WTC11 (cell line): ENCODE measurements at regions of chr3 and their contacts with region 1.

Region 1: GRCh38 chr3:31550452-31551251 is 17.9 kb downstream of the STT3B start:
- DNase-seq: no peak
- ATAC-seq: peak; percentile 73; the same call in 1 of the 2 replicates
- H3K4me3 Mint-ChIP-seq: no peak overlapping the region
- H3K27ac Mint-ChIP-seq: no peak overlapping the region
- H3K4me1 Mint-ChIP-seq: peaks cover 56% of the 10 kb centered on the region
- H3K27me3 Mint-ChIP-seq: no peaks in the 10 kb centered on the region
- CTCF ChIP-seq: no peak

Region 2: GRCh38 chr3:31531992-31532586 is 18.6 kb before region 1 on chr3:
- CTCF ChIA-PET with region 1: interaction called, 11 read pairs
- POLR2A ChIA-PET with region 1: interaction called, 11 read pairs
- DNase-seq: peak; percentile 99
- ATAC-seq: peak; percentile 95
- H3K4me3 Mint-ChIP-seq: no peak overlapping the region
- H3K27ac Mint-ChIP-seq: peak overlapping the region; percentile 98
- H3K4me1 Mint-ChIP-seq: peaks cover 25% of the 10 kb centered on the region
- H3K27me3 Mint-ChIP-seq: no peaks in the 10 kb centered on the region
- CTCF ChIP-seq: no peak

Region 3: DNA sequence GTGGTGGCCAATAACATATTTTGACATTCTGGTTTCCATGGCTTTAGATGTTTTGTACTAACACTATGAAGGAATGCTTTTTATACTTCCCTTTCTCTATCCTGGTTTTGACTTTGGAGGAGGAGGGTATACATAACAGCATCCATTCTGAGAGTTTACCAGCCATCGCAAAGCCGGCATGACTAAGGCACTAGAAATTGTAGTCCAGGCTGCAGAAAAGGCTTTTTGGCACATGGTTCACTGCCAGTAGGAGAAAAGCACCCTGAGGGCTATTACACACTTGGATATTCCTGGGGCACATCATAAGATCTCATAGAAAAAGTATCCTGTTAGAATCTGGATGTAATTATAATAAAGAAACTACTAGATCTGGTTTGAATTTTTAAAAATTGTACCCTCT is 83.8 kb after region 1 on chr3:
- CTCF ChIA-PET with region 1: no interaction called
- POLR2A ChIA-PET with region 1: no interaction called
- DNase-seq: no peak
- ATAC-seq: no peak
- H3K4me3 Mint-ChIP-seq: no peak overlapping the region
- H3K27ac Mint-ChIP-seq: no peak overlapping the region
- H3K4me1 Mint-ChIP-seq: no peaks in the 10 kb centered on the region
- H3K27me3 Mint-ChIP-seq: no peaks in the 10 kb centered on the region
- CTCF ChIP-seq: no peak

Region 4: GRCh38 chr3:31922962-31923361 is 372.3 kb after region 1 on chr3:
- CTCF ChIA-PET with region 1: no interaction called
- POLR2A ChIA-PET with region 1: no interaction called
- DNase-seq: no peak
- ATAC-seq: no peak
- H3K4me3 Mint-ChIP-seq: no peak overlapping the region
- H3K27ac Mint-ChIP-seq: peak overlapping the region; percentile 76
- H3K4me1 Mint-ChIP-seq: peaks cover 68% of the 10 kb centered on the region
- H3K27me3 Mint-ChIP-seq: no peaks in the 10 kb centered on the region
- CTCF ChIP-seq: no peak